IMR-90 (cell line): ENCODE measurements at regions of chr7 and their contacts with region 1.

Region 1: GRCh38 chr7:5363729-5364128 is 59.9 kb downstream of the TNRC18 start:
- DNase-seq: no peak
- ATAC-seq: no peak
- H3K4me3 ChIP-seq: no peak overlapping the region
- H3K27ac ChIP-seq: no peak overlapping the region
- H3K4me1 ChIP-seq: no peaks in the 10 kb centered on the region
- H3K27me3 ChIP-seq: no peaks in the 10 kb centered on the region
- CTCF ChIP-seq: no peak
- POLR2A ChIP-seq: no peak
- RAD21 ChIP-seq: no peak

Region 2: DNA sequence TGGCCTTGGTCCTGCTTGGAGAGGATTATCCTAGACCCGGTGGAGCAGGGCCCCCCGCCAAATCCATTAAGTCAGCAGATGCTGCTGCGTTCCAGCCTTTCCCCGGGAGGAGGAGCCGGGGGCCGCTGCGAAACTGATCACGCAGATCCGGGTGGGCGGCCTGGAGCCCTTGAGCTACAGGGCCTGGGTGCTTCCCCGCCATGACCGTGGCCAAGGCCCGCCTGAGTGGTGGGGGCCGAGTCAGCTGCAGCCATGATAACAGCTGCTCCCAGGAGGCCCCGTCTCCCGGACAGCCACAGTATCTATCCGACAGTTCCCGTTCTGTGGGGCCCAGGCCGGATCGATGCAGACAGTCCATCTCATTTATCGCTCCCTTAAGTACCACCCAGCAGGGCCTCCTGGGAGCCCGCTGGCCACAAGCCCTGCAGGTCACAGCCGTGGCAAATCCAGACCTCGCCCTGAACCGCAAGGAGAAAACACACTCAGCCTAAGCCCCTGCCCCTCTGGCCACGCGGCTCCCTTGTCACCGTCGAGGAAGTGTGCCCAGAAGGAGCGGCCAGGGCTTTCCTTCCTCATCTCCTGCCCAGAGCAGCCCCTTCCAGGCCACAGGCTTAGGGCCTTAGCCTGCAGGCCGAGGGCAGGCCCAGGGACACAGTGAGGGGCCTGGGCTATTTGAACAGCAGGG is 115.4 kb before region 1 on chr7:
- CTCF ChIA-PET with region 1: no interaction called
- POLR2A ChIA-PET with region 1: no interaction called
- dilution Hi-C with region 1: no loop called
- in situ Hi-C with region 1: no loop called
- intact Hi-C with region 1: loop called (anchors 10 kb)
- DNase-seq: peak; percentile 21
- ATAC-seq: no peak; the same call in none of the 2 replicates
- H3K4me3 ChIP-seq: no peak overlapping the region
- H3K27ac ChIP-seq: no peak overlapping the region
- H3K4me1 ChIP-seq: no peaks in the 10 kb centered on the region
- H3K27me3 ChIP-seq: peaks cover 9% of the 10 kb centered on the region; the same call in 1 of the 2 replicates
- CTCF ChIP-seq: no peak
- POLR2A ChIP-seq: no peak
- RAD21 ChIP-seq: no peak

Region 3: DNA sequence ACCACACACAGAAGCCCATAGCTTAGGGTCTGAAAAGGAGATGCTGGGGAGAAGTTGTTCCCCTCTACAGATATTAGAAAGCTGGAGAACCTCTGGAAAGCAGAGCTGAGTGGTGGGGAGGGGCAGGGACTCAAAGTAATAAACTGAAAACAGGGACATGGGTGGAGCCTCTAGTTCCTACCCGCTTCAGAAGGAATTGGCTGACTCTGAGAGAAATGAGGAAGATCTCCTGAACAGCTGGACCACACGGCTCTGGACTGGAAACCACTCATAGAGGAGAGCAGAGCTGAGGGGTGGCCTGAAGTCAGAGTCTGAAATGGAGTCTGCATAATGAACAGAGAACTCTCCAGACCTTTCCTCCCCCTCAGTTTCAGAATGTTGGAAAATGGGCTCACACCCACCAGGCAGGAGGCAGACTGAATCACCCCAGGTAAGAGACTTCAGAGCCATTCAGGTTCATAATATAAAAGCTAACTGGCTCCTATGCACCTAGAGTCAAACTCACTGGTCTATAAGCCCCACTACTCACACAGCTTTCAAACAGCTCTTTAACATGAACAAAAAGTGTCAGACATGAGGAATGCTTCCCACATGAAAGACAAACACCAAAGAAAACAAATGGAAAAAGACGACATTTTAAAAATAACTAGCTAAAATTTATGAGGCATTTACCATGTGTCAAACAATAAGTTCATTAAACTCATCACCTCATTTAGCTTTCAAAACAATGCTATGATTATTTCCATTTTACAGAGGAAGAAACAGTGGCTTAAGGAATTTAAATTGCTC is 349.6 kb after region 1 on chr7:
- CTCF ChIA-PET with region 1: no interaction called
- POLR2A ChIA-PET with region 1: no interaction called
- dilution Hi-C with region 1: no loop called
- in situ Hi-C with region 1: no loop called
- intact Hi-C with region 1: no loop called
- DNase-seq: no peak
- ATAC-seq: no peak
- H3K4me3 ChIP-seq: no peak overlapping the region
- H3K27ac ChIP-seq: no peak overlapping the region
- H3K4me1 ChIP-seq: no peaks in the 10 kb centered on the region
- H3K27me3 ChIP-seq: no peaks in the 10 kb centered on the region
- CTCF ChIP-seq: no peak
- POLR2A ChIP-seq: no peak
- RAD21 ChIP-seq: no peak

Region 4: GRCh38 chr7:6577365-6578113 is 1213.8 kb after region 1 on chr7 and contains the start of gene ZDHHC4:
- CTCF ChIA-PET with region 1: no interaction called
- POLR2A ChIA-PET with region 1: no interaction called
- dilution Hi-C with region 1: no loop called
- in situ Hi-C with region 1: no loop called
- intact Hi-C with region 1: no loop called
- DNase-seq: peak; percentile 85
- ATAC-seq: peak; percentile 98
- H3K4me3 ChIP-seq: peak within 1 kb of the TSS; percentile 70
- H3K27ac ChIP-seq: peak within 1 kb of the TSS; percentile 71
- H3K4me1 ChIP-seq: peaks cover 6% of the 10 kb centered on the region
- H3K27me3 ChIP-seq: no peaks in the 10 kb centered on the region
- CTCF ChIP-seq: no peak
- POLR2A ChIP-seq: peak; percentile 93
- RAD21 ChIP-seq: no peak
- total RNA-seq, gene ZDHHC4: 40.0 and 58.3 TPM in 2 replicates